PC-3 (cell line): ENCODE measurements at regions of chr1 and their contacts with region 1.

Region 1: DNA sequence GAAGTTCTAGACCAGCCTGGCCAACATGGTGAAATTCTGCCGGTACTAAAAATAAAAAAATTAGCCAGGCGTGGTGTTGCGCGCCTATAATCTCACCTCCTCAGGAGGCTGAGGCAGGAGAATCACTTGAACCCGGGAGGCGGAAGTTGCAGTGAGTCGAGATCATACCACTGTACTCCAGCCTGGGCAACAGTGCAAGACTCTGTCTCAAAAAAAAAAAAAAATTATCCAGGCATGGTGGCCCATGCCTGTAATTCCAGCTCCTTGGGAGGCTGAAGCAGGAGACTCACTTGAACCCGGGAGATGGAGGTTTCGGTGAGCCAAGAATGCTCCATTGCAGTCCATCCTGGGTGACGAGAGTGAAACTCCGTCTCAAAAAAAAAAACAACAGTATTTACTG is 18.5 kb upstream of the RAB42 start:
- DNase-seq: no peak
- ATAC-seq: no peak
- H3K4me3 ChIP-seq: no peak overlapping the region
- H3K27ac ChIP-seq: no peak overlapping the region
- H3K4me1 ChIP-seq: no peaks in the 10 kb centered on the region
- H3K27me3 ChIP-seq: no peaks in the 10 kb centered on the region
- CTCF ChIP-seq: no peak

Region 2: DNA sequence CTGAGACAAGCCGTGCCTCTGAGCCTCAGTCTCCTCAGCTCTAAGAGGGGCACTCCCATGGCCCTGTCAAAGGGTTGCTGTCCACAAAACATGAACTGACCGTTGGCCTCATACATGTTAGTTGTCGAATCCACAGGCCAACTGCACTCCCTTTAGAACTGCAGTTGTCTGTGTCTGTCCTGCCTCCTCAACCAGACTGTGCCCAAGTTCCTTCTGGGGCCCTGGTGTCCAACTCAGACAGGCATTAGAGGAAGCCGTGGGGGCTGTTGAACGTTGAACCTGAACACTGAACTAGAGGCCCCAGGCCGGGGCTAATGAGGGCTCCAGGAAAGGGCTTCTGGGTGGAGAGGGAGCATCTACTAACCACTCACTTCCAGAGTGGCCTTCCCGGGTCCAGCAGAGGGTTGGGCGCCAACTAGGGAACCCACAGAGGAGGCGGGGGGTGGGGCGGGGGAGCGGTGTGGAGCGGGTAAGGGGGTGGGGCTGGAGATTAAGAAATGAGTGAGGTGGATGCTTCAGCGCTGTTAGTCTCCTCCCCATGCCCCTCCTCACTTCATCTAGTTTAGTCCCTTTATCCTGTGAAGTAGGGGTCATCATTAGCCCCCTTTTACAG is 18.2 kb after region 1 on chr1 and contains the start of gene RAB42:
- CTCF ChIA-PET with region 1: no interaction called
- POLR2A ChIA-PET with region 1: no interaction called
- intact Hi-C with region 1: no loop called
- DNase-seq: no peak
- ATAC-seq: no peak
- H3K4me3 ChIP-seq: peak within 1 kb of the TSS; percentile 66
- H3K27ac ChIP-seq: no peak within 1 kb of the TSS
- H3K4me1 ChIP-seq: peaks cover 17% of the 10 kb centered on the region
- H3K27me3 ChIP-seq: no peaks in the 10 kb centered on the region
- CTCF ChIP-seq: no peak
- total RNA-seq, gene RAB42: 1.5 and 4.7 TPM in 2 replicates

Region 3: DNA sequence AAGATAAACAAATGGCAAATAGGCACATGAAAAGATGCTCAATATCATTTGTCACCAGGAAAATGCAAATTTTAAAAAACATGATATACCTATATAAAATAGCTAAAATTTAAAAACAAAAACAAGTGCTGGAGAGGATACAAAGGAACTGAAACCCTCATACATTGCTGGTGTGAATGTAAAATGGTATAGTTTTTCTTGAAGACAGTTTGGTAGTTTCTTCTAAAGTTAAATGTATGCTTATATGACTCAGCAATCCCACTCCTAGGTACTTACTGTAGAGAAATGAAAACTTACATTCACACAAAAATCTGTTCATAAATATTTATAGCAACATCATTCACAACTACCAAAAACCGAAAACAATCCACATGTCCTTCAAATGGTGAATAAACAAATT is 58.1 kb after region 1 on chr1:
- CTCF ChIA-PET with region 1: no interaction called
- POLR2A ChIA-PET with region 1: interaction called, 23 read pairs
- intact Hi-C with region 1: no loop called
- DNase-seq: no peak
- ATAC-seq: no peak
- H3K4me3 ChIP-seq: no peak overlapping the region
- H3K27ac ChIP-seq: no peak overlapping the region
- H3K4me1 ChIP-seq: peaks cover 6% of the 10 kb centered on the region
- H3K27me3 ChIP-seq: no peaks in the 10 kb centered on the region
- CTCF ChIP-seq: no peak

Region 4: DNA sequence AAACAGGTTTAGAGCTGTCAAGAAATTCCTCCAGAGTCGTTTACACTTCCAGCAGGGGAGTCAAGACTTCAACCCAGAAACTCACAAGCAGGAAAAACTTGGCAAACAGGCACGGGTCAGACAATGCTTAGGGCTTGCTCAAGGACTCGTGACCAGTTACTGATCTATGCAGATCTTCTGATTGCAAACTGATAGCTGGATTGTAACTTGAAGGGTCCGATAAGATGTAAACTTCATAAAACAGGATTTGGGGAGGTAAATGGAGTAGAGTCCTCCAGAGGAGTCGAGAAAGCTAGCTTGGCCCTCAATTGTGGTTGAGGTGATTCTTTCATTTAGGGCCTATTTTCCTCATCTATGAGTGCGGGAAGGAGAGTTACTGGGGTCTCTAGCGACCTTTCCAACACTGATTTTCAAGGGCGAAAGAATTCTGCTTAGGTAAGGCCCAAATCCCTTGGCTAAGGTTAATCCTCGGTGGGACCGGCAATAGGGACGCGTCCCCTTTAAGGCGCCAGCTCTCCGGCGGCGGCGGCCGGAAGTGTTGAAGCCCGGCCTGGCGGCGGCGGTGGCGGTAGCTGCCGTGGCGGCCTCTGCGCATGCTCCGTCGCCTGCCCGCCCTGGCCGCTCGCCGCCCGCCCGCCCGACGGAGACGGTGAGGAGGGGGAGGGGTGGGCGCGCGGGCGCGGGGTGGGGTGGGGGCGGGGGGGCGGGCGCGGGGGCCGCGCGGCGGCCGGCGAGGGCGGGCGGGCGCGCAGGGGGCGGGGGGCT is 94.8 kb after region 1 on chr1 and contains the start of gene GMEB1:
- CTCF ChIA-PET with region 1: no interaction called
- POLR2A ChIA-PET with region 1: no interaction called
- intact Hi-C with region 1: no loop called
- DNase-seq: peak; percentile 87
- ATAC-seq: peak; percentile 84
- H3K4me3 ChIP-seq: peak within 1 kb of the TSS; percentile 83
- H3K27ac ChIP-seq: peak within 1 kb of the TSS; percentile 68
- H3K4me1 ChIP-seq: peaks cover 10% of the 10 kb centered on the region; the same call in 1 of the 2 replicates
- H3K27me3 ChIP-seq: no peaks in the 10 kb centered on the region
- CTCF ChIP-seq: no peak
- total RNA-seq, gene GMEB1: 5.2 and 10.8 TPM in 2 replicates